Pancreas (tissue), 10 donors: ENCODE measurements at regions of chr1 and their contacts with region 1.

Region 1: DNA sequence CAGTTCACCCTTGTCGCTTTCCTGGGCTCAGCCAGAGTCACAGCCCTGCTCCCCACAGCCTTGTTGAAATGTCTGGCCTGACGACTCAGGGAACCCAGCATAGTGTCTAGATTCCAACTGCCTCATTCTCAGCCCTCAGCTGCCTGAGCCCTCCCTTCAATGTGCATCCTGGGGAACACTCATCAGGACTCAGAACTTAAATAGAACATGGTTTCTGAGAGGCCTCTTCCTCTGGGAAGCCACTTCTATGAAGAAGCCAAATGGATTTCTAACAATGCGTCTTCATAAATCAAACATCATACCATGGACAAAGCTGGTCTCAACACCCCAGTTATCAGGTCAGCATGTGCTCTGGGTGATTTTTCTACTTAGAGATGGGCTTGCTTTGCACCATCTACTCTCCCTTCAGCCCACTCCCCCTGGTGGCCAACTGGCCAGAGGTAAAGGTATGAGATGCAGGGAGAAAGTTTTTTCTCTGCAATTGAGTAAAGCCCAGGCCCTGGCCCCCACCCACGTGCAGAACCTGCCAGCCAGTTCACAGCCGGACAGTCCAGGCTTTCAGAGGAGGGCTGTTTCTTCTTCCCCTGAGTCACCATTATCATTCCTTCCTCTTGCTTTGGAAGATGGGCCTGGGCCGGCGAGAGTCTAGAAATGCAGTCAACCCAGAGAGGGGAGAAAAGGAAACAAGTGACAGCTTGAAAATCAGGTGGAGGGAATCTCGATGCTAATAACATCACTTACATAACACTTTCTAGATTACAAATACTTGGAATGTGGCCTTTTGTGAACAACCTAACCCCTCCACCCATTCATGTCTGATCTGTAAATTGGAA is 32.1 kb downstream of the CD244 start:
- DNase-seq: peak; percentile 45 to 89 (median 74)
- ATAC-seq: peak; percentile 53 to 87 (median 82)
- H3K4me3 ChIP-seq: no peak overlapping the region
- H3K27ac ChIP-seq: no peak overlapping the region
- H3K4me1 ChIP-seq: no peaks in the 10 kb centered on the region
- H3K27me3 ChIP-seq: no peaks in the 10 kb centered on the region
- CTCF ChIP-seq: peak; percentile 31 to 58 (median 50)

Region 2: DNA sequence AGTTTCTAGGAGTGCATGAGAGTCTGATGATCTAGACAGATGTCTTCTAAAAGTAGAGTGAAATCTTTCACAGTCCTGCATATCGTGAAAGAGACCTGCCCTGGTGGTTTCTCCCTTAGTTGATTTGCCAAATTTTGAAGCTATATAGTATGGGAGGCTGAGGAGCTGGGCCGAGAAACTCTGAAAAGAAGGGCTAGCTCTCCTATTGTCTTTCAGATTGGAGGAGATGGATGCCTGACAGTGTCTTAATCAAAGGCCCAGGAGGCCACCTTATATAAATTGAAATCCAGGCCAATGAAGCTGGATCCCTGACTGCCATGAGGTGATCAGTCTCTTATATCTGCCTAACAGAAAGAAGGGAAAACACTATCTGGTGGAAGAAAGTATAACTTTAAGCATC is 232.8 kb before region 1 on chr1:
- intact Hi-C with region 1: no loop called
- DNase-seq: no peak
- ATAC-seq: no peak
- H3K4me3 ChIP-seq: no peak overlapping the region
- H3K27ac ChIP-seq: no peak overlapping the region
- H3K4me1 ChIP-seq: no peaks in the 10 kb centered on the region
- H3K27me3 ChIP-seq: no peaks in the 10 kb centered on the region
- CTCF ChIP-seq: no peak

Region 3: DNA sequence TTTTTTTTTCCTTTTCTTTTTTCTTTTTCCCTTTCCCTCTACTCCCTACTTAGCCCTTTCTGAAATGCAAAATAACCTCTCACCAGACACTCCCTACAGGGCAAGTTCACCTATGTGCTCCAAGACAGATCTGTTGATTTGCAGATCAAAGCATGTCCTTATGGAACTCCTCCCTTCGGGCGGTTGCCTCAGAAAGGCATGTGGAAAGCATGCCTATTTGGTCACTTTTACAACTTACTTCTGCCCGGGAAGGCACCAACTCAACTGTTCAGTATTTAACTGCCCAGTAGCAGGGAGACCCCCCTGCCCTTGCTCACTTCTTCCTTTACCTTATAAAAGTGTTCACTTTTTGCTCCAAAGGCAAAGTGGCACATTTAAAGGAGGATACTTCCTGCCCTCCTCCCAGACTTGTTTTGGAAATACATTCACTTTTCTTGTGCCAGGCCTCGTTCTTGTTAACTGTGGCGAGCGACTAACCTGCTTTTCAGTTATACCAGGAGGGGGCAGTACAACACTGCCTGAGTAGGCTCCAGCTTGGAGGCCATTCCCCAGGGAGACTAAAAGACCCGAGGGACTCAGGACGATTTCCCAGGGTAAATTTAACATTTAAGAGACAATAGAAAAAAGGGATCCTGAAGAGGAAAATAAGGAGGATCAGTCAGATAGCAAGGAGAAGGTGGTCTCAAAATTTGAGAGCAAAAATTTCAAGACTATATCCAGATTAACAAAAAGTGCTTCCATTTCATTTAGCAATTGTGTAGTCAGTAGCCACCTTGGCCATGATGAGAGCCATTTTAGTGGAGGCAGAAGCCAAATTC is 103.8 kb before region 1 on chr1:
- intact Hi-C with region 1: loop called in 2 of 3 experiments (anchors 5 kb)
- DNase-seq: peak in 4 of 6 donors; percentile 20 to 60 (median 42)
- ATAC-seq: peak; percentile 76 to 99 (median 96)
- H3K4me3 ChIP-seq: no peak overlapping the region
- H3K27ac ChIP-seq: no peak overlapping the region
- H3K4me1 ChIP-seq: no peaks in the 10 kb centered on the region
- H3K27me3 ChIP-seq: no peaks in the 10 kb centered on the region
- CTCF ChIP-seq: peak; percentile 76 to 88 (median 80)

Region 4: GRCh38 chr1:160884579-160884978 is 54.0 kb after region 1 on chr1:
- intact Hi-C with region 1: no loop called
- DNase-seq: no peak
- ATAC-seq: no peak
- H3K4me3 ChIP-seq: no peak overlapping the region
- H3K27ac ChIP-seq: no peak overlapping the region
- H3K4me1 ChIP-seq: no peaks in the 10 kb centered on the region
- H3K27me3 ChIP-seq: no peaks in the 10 kb centered on the region
- CTCF ChIP-seq: no peak

Region 5: DNA sequence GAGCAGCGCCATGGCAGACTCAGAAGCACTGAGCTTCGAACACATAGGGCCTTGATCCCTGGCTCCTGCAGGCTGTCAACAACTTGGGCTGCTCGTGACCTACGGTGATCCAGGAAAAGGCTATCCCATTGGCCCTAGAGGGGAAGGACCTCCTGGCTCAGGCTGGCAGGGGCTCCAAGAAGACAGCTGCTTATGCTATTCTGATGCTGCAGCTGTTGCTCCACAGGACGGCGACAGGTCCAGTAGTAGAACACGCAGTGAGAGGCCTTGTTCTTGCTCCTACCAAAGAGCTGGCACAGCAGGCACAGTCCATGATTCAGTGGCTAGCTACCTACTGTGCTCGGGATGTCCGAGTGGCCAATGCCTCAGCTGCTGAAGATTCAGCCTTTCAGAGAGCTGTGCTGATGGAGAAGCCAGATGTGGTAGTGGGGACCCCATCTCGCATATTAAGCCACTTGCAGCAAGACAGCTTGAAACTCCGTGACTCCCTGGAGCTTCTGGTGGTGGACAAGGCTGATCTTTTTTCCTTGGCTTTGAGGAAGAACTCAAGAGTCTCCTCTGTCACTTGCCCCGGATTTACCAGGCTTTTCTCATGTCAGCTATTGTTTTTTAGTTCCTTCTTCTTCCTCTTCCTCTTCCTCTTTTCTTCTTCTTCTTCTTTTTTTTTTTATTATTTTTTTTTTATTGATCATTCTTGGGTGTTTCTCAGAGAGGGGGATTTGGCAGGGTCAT is 105.2 kb after region 1 on chr1:
- intact Hi-C with region 1: no loop called
- DNase-seq: no peak
- ATAC-seq: no peak
- H3K4me3 ChIP-seq: no peak overlapping the region
- H3K27ac ChIP-seq: no peak overlapping the region
- H3K4me1 ChIP-seq: no peaks in the 10 kb centered on the region
- H3K27me3 ChIP-seq: no peaks in the 10 kb centered on the region
- CTCF ChIP-seq: no peak

Region 6: DNA sequence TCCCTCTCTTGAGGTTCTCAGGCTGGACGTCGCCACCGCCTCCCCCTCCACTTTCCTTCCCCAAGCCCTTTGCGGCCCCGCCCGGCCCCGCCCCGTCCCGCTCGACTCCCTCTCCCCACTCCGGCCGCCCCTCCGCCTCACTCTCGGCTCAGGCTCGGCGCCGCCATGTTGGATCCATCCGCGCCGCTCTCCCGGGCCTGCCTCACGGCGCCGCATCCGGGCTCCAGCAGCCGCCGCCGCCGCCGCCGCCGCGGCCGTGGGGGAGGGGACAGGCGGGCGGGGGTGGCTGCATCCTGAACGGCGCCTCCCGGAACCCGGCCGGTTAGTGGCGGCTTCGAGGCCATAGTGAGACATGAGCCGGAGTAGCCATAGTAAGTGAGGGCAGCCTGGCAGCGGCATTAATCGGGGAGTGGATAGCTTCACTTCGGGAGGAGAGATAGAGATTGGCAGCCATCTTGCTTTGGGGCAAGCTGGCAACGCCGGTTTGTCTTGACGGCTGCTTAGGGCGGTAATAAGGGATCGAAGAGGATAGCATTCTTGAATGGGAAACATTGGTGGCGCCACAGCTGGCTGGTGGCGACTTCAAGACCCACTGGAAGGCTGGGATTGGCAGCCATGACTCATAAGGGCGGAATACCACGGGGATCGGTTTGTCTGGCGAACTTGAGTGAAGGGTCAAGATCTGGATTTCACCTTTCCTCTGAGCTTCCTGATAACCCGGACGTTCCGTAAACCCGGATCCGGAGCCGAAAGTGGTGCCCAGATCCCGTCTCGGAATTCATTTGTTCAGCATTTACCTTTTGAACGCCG is 302.1 kb after region 1 on chr1 and contains the start of gene DEDD:
- intact Hi-C with region 1: loop called in 1 of 3 experiments (anchors 10 kb)
- DNase-seq: peak; percentile 89 to 96 (median 94)
- ATAC-seq: peak; percentile 89 to 95 (median 93)
- H3K4me3 ChIP-seq: peak within 1 kb of the TSS; percentile 51 to 79 (median 64)
- H3K27ac ChIP-seq: peak within 1 kb of the TSS; percentile 87 to 97 (median 92)
- H3K4me1 ChIP-seq: peaks cover 6 to 12% (median 9%) of the 10 kb centered on the region in 3 donors
- H3K27me3 ChIP-seq: no peaks in the 10 kb centered on the region
- CTCF ChIP-seq: no peak
- total RNA-seq, gene DEDD: 12.4 to 20.8 (median 15.6) TPM